Left lung (tissue), 14 donors: ENCODE measurements at regions of chr7 and their contacts with region 1.

Region 1: GRCh38 chr7:151336027-151336708 is 5.4 kb upstream of the NUB1 start:
- DNase-seq: no peak
- ATAC-seq: no peak
- H3K4me3 ChIP-seq: no peak overlapping the region
- H3K27ac ChIP-seq: no peak overlapping the region
- H3K4me1 ChIP-seq: peaks cover 0 to 15% of the 10 kb centered on the region in 2 donors
- H3K27me3 ChIP-seq: no peaks in the 10 kb centered on the region
- CTCF ChIP-seq: no peak

Region 2: DNA sequence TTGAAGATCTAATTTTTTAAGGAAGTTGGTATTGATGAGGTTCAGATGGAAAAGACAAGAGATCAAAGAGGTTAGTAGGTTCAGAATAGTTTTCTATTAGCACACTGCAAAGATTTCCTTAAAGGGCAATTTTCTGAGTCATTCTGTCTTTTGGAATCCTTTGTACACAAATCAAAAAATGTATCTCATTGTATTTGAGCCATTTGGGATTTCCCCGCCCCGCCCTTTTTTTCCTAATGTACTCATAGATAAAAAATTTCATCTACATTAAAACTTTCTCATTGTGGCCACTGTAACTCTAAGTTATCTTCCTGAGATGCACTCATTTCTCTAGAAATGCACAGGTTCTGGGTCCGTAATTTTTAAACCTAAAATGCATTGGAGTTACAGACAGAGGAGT is 716.1 kb before region 1 on chr7:
- intact Hi-C with region 1: no loop called
- DNase-seq: no peak
- ATAC-seq: no peak
- H3K4me3 ChIP-seq: no peak overlapping the region
- H3K27ac ChIP-seq: peak overlapping the region in 1 of 2 donors; percentile 33
- H3K4me1 ChIP-seq: no peaks in the 10 kb centered on the region
- H3K27me3 ChIP-seq: no peaks in the 10 kb centered on the region
- CTCF ChIP-seq: no peak

Region 3: GRCh38 chr7:151322906-151323305 is 13.3 kb before region 1 on chr7:
- intact Hi-C with region 1: loop called in 1 of 2 experiments (anchors 2 kb)
- DNase-seq: no peak
- ATAC-seq: no peak
- H3K4me3 ChIP-seq: no peak overlapping the region
- H3K27ac ChIP-seq: no peak overlapping the region
- H3K4me1 ChIP-seq: no peaks in the 10 kb centered on the region
- H3K27me3 ChIP-seq: no peaks in the 10 kb centered on the region
- CTCF ChIP-seq: no peak

Region 4: DNA sequence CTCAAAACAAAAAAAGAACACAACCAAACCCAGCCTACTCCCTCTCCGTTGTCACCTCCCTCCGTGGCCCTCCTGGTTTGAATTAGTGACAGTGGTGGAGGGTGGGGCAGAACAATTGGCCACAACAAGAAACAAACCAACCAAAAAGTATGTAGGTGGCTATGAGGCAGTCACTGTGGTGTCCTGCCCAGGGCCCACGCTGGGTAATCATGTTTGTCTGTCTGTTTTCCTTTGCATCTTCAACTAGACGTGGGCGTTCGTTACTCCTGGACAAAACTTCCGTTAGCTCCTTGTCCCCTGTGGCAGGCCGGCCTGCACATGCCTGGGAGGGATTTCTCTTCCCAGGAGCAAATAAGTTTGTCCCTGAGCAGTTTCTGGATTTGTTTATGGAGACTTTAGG is 1261.3 kb after region 1 on chr7:
- intact Hi-C with region 1: no loop called
- DNase-seq: no peak
- ATAC-seq: no peak
- H3K4me3 ChIP-seq: no peak overlapping the region
- H3K27ac ChIP-seq: no peak overlapping the region
- H3K4me1 ChIP-seq: no peaks in the 10 kb centered on the region
- H3K27me3 ChIP-seq: no peaks in the 10 kb centered on the region
- CTCF ChIP-seq: no peak